Mammary epithelial cell (primary cell): ENCODE measurements at regions of chr11 and their contacts with region 1.

Region 1: GRCh38 chr11:16097543-16097942 is 258.8 kb downstream of the SOX6 start:
- DNase-seq: peak; percentile 90
- H3K4me3 ChIP-seq: peak overlapping the region in 1 of 3 experiments; percentile 16
- H3K27ac ChIP-seq: peak overlapping the region; percentile 51
- H3K4me1 ChIP-seq: peaks cover 35% of the 10 kb centered on the region
- H3K27me3 ChIP-seq: no peaks in the 10 kb centered on the region
- CTCF ChIP-seq: no peak

Region 2: DNA sequence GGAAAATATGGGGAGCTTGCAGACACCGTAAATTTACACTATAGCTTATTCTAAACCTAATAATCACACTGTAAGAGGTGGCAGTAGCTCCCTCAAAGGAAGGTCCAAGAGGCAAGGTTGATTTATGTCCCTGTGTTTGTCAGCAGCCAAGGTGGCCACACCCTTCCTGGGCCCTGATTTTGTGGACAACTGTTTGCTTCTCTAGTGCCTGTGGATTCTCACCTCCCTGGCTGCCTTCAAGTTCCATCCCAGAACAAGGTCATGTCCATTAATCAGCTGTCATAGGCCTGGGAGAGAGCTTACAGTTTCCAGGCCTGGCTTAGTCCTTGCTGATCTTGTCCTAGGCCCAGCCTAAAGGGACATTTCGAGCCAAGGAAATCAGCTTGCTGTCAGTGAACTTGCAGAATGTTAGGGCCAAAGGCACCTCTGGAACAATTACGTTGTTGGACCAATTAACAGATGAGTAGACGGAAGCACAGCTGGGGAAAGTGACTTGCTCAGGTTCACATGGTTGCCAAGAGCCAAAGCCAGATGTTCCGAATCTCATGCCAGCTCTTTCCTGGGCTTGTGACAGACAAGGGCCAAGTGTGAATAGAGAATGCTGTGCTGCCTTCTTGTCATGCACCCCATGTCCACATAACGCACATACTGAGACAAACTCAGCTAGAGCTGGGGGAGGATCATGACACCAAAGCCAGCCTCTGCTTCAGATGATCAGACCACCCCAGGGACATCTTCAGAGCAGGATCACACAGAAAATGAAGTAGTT is 366.7 kb before region 1 on chr11:
- CTCF ChIA-PET with region 1: no interaction called
- dilution Hi-C with region 1: no loop called
- in situ Hi-C with region 1: no loop called
- intact Hi-C with region 1: no loop called
- DNase-seq: no peak
- H3K4me3 ChIP-seq: no peak overlapping the region
- H3K27ac ChIP-seq: no peak overlapping the region
- H3K4me1 ChIP-seq: no peaks in the 10 kb centered on the region
- H3K27me3 ChIP-seq: no peaks in the 10 kb centered on the region
- CTCF ChIP-seq: no peak

Region 3: DNA sequence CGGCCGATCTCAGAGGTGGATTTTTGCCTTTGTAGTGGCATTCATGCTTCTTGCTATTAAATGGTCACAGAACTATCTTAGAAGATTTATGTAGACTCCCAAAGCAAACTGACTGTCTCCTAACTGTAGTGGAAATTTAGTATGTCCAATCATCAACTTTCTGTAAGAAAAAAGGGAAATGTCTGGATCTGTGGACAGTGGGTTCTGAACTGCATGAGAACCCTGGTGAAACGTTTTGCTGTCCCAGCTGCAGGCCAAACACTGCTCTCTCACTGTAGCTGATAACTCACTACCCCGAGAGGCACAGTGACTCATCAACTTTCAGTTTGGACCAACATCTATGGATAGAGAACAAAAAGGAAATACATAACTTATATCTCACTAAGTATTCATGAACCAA is 128.3 kb before region 1 on chr11:
- CTCF ChIA-PET with region 1: interaction called, 5 read pairs
- dilution Hi-C with region 1: no loop called
- in situ Hi-C with region 1: no loop called
- intact Hi-C with region 1: loop called (anchors 5 kb)
- DNase-seq: peak; percentile 87
- H3K4me3 ChIP-seq: peak overlapping the region in 2 of 3 experiments; percentile 7 to 27
- H3K27ac ChIP-seq: peak overlapping the region; percentile 99
- H3K4me1 ChIP-seq: peaks cover 57% of the 10 kb centered on the region
- H3K27me3 ChIP-seq: no peaks in the 10 kb centered on the region
- CTCF ChIP-seq: no peak

Region 4: DNA sequence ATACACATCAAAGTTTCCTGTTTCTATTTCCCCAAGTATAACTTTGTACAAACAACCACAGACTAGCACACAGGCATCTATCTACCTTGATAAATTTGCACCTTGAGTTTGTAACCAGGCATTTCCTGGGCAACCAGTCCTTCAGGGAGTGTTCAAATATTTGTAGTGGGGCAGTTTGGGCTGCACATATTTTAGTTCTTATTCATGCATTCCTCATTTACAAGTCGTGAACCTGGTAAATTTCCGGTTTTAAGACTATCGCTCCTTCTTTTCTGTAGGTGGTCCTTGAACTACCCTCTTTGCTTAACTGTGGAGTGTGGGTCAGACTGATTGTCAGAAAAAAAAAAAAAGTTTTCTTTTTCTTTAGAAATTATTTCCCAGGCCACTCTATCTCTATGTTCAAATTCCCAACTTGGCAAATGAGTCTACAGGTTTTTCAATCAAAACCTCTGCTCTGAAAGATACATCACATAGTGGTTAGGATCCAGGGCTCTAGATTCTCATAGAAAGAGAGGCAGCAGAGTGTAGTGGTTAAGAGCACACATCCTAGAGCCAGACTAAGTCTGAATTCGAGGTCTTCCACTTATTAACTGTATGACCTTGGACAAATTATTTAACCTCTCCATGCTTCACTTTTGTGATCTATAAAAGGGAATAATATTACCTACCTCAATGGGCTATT is 57.3 kb after region 1 on chr11:
- CTCF ChIA-PET with region 1: no interaction called
- dilution Hi-C with region 1: no loop called
- in situ Hi-C with region 1: no loop called
- intact Hi-C with region 1: loop called (anchors 5 kb)
- DNase-seq: peak; percentile 58
- H3K4me3 ChIP-seq: no peak overlapping the region
- H3K27ac ChIP-seq: peak overlapping the region; percentile 94
- H3K4me1 ChIP-seq: peaks cover 40% of the 10 kb centered on the region
- H3K27me3 ChIP-seq: no peaks in the 10 kb centered on the region
- CTCF ChIP-seq: no peak

Region 5: DNA sequence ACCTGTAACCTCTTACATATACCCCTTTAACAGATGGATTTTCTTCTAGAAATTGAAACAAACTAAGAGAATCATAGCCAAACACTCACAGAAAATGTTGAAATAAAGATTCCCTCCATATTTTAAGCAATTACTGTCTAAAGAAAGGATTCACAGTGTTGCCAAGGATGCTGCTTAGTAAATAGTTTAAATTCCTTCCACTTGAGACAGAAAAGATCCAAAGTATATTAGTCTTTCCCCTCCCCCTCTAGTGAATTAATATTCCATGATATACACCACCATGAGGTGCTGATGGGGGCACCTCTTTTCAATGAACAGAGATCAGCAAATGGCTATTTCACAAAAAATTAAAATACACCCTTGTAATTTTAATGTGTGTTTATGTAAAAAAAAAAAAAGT is 72.0 kb after region 1 on chr11:
- CTCF ChIA-PET with region 1: no interaction called
- dilution Hi-C with region 1: no loop called
- in situ Hi-C with region 1: no loop called
- intact Hi-C with region 1: no loop called
- DNase-seq: no peak
- H3K4me3 ChIP-seq: no peak overlapping the region
- H3K27ac ChIP-seq: no peak overlapping the region
- H3K4me1 ChIP-seq: no peaks in the 10 kb centered on the region
- H3K27me3 ChIP-seq: no peaks in the 10 kb centered on the region
- CTCF ChIP-seq: peak in 1 of 2 donors; percentile 14

Region 6: GRCh38 chr11:16191212-16191867 is 93.8 kb after region 1 on chr11:
- CTCF ChIA-PET with region 1: no interaction called
- dilution Hi-C with region 1: no loop called
- in situ Hi-C with region 1: no loop called
- intact Hi-C with region 1: no loop called
- DNase-seq: no peak
- H3K4me3 ChIP-seq: no peak overlapping the region
- H3K27ac ChIP-seq: no peak overlapping the region
- H3K4me1 ChIP-seq: no peaks in the 10 kb centered on the region
- H3K27me3 ChIP-seq: peaks cover 1% of the 10 kb centered on the region
- CTCF ChIP-seq: peak in 1 of 2 donors; percentile 3